Lower lobe of right lung (tissue), 2 donors: ENCODE measurements at regions of chr17 and their contacts with region 1.

Region 1: DNA sequence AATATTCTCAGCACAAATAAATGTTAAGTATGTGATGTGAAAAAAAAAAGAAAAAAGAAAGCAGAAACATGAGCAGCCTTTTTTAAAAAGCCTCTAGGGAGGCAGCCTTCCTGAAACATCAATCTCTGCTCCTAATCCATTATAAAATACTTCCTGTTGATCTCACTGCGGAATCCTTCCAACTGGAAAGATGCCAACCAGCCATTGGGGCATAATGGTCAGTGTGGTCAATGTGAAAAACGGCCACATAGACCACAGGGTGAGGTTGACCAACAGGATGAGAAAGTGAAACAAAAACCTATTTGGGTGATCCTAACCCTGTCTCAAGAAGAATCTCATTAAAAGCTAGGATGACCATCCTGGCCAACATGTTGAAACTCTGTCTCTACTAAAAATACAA is 26.1 kb upstream of the ABCA8 start:
- DNase-seq: no peak
- ATAC-seq: peak; percentile 51 to 60
- H3K4me3 ChIP-seq: no peak overlapping the region
- H3K27ac ChIP-seq: no peak overlapping the region
- H3K4me1 ChIP-seq: peaks cover 4% of the 10 kb centered on the region
- H3K27me3 ChIP-seq: no peaks in the 10 kb centered on the region
- CTCF ChIP-seq: no peak

Region 2: DNA sequence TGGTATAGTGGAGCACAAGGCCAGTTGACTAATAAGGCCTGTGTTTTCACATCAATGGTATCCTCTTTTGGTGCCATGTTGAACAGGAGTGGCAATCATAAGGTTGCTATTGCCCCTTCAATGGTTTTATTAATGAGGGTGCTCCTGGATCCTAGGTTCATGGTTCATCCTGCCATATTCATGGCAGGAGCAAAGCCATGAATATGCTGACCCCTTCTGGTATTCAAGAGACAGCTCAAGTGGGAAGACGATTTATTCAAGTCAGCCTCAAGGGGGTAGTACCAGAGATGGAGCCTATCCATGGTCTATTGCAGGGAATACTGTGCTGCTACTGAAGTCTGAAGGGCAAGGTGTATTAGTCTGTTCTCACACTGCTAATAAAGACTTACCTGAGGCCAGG is 76.9 kb after region 1 on chr17:
- intact Hi-C with region 1: loop called (anchors 10 kb)
- DNase-seq: no peak
- ATAC-seq: no peak
- H3K4me3 ChIP-seq: no peak overlapping the region
- H3K27ac ChIP-seq: no peak overlapping the region
- H3K4me1 ChIP-seq: no peaks in the 10 kb centered on the region
- H3K27me3 ChIP-seq: no peaks in the 10 kb centered on the region
- CTCF ChIP-seq: peak; percentile 11